ENCODE measurements at regions of chr11 and their contacts with region 1.

Region 1: DNA sequence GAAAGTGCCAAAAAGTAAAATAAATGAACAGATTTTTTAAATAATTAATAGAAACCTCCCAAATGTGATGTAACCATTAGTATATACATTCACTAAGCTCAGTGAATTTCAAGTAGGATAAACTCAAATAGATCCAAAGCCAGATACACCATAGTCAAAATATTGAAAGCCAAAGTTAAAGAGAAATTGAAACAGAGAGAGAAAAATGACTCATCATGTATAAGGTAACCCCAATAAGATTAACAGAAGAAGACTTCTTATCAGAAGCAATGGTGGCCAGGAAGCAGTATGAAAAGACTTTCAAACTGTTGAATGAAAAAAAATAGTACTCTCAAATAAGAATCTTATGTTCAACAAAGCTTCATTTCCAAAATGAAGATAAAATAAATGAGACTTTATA is 70.5 kb downstream of the LUZP2 start:
- DNase-seq: no peak
- ATAC-seq: no peak
- H3K4me3 ChIP-seq: no peak overlapping the region
- H3K4me3 Mint-ChIP-seq: no peak overlapping the region
- H3K27ac ChIP-seq: no peak overlapping the region
- H3K27ac Mint-ChIP-seq: no peak overlapping the region
- H3K4me1 ChIP-seq: no peaks in the 10 kb centered on the region
- H3K4me1 Mint-ChIP-seq: no peaks in the 10 kb centered on the region
- H3K27me3 ChIP-seq: no peaks in the 10 kb centered on the region
- H3K27me3 Mint-ChIP-seq: no peaks in the 10 kb centered on the region
- CTCF ChIP-seq: no peak

Region 2: DNA sequence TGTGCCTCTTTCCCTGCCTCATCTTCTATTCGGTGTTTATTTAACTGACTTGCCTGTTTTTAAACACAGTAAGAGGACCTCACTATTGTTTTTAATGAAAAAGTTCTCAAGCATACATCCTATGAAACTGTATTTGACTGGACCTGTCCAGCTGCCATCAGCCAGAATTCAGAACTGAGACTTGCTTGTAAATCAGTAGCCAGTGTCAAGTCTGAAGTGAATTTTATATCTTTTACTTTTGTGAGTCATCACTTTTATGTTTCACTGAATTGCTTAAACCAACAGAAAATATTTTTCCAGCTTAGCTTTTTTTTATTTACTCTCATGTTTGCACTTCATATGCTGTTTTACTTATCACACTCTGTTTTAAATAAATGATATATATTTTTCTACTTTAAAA is 17.8 kb after region 1 on chr11:
- CTCF ChIA-PET with region 1: no interaction called
- POLR2A ChIA-PET with region 1: no interaction called
- intact Hi-C with region 1: no loop called
- DNase-seq: no peak
- ATAC-seq: no peak
- H3K4me3 ChIP-seq: no peak overlapping the region
- H3K4me3 Mint-ChIP-seq: no peak overlapping the region
- H3K27ac ChIP-seq: no peak overlapping the region
- H3K27ac Mint-ChIP-seq: no peak overlapping the region
- H3K4me1 ChIP-seq: no peaks in the 10 kb centered on the region
- H3K4me1 Mint-ChIP-seq: no peaks in the 10 kb centered on the region
- H3K27me3 ChIP-seq: no peaks in the 10 kb centered on the region
- H3K27me3 Mint-ChIP-seq: no peaks in the 10 kb centered on the region
- CTCF ChIP-seq: no peak

Region 3: DNA sequence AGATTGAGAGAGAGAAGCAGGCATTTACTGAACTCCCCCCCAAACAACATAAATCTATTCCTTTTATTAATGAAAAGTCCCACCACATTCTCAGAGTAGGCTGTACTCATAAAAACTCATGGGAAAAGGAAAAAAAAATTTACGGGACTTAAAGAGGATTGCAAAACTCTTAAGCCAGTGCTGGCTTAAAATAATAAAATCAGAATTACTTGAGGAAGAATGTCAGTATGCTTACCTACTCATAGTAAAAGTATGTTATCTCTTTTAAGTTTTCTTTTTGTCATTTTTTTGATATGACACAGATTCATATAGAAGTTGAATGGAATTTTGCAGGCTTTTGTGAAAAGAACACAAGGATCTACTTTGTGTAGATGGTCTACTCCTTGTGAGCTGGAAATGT is 55.7 kb after region 1 on chr11:
- CTCF ChIA-PET with region 1: no interaction called
- POLR2A ChIA-PET with region 1: no interaction called
- intact Hi-C with region 1: loop called in 1 of 2 experiments (anchors 10 kb)
- DNase-seq: no peak
- ATAC-seq: no peak
- H3K4me3 ChIP-seq: no peak overlapping the region
- H3K4me3 Mint-ChIP-seq: no peak overlapping the region
- H3K27ac ChIP-seq: no peak overlapping the region
- H3K27ac Mint-ChIP-seq: no peak overlapping the region
- H3K4me1 ChIP-seq: no peaks in the 10 kb centered on the region
- H3K4me1 Mint-ChIP-seq: no peaks in the 10 kb centered on the region
- H3K27me3 ChIP-seq: no peaks in the 10 kb centered on the region
- H3K27me3 Mint-ChIP-seq: no peaks in the 10 kb centered on the region
- CTCF ChIP-seq: no peak